Prostate gland (tissue), 2 donors: ENCODE measurements at regions of chr4 and their contacts with region 1.

Region 1: GRCh38 chr4:157992038-157992705 is 180.7 kb downstream of the GASK1B start:
- DNase-seq: peak; percentile 79
- H3K4me3 ChIP-seq: no peak overlapping the region
- H3K27ac ChIP-seq: peak overlapping the region; percentile 35 to 46
- H3K4me1 ChIP-seq: peaks cover 10% of the 10 kb centered on the region
- H3K27me3 ChIP-seq: no peaks in the 10 kb centered on the region
- CTCF ChIP-seq: peak; percentile 63 to 87 (median 82)
- POLR2A ChIP-seq: no peak

Region 2: GRCh38 chr4:157700898-157701694 is 291.1 kb before region 1 on chr4:
- intact Hi-C with region 1: no loop called
- DNase-seq: no peak
- H3K4me3 ChIP-seq: no peak overlapping the region
- H3K27ac ChIP-seq: no peak overlapping the region
- H3K4me1 ChIP-seq: no peaks in the 10 kb centered on the region
- H3K27me3 ChIP-seq: no peaks in the 10 kb centered on the region
- CTCF ChIP-seq: no peak
- POLR2A ChIP-seq: no peak

Region 3: DNA sequence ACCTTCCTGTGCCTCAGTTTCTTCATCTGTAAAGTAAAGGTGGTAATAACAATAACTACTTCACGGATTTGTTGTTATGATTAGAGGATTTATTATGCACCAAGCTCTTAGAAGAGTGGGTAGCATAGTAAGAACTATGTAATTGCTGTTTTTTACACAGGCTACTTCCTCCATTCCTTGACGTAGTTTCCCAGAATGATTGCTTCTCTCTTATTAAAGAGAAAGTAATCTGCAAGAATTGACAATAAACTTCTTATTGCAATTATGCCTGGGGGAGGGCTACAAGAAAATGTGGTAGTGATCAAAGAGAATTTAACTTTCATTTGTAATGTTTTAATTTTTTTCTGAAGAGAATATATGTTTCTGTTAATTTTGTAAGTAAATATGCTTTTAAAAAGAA is 58.0 kb before region 1 on chr4:
- intact Hi-C with region 1: no loop called
- DNase-seq: no peak
- H3K4me3 ChIP-seq: no peak overlapping the region
- H3K27ac ChIP-seq: no peak overlapping the region
- H3K4me1 ChIP-seq: no peaks in the 10 kb centered on the region
- H3K27me3 ChIP-seq: no peaks in the 10 kb centered on the region
- CTCF ChIP-seq: no peak
- POLR2A ChIP-seq: no peak

Region 4: GRCh38 chr4:158172261-158173258 is 180.4 kb after region 1 on chr4 and contains the start of gene GASK1B:
- intact Hi-C with region 1: loop called (anchors 2 kb)
- DNase-seq: peak; percentile 20
- H3K4me3 ChIP-seq: peak within 1 kb of the TSS; percentile 30 to 39
- H3K27ac ChIP-seq: peak within 1 kb of the TSS; percentile 66 to 71
- H3K4me1 ChIP-seq: peaks cover 7% of the 10 kb centered on the region
- H3K27me3 ChIP-seq: no peaks in the 10 kb centered on the region
- CTCF ChIP-seq: peak in 3 of 4 experiments; percentile 47 to 63 (median 58)
- POLR2A ChIP-seq: no peak
- total RNA-seq, gene GASK1B: 20.2 to 27.3 TPM

Region 5: DNA sequence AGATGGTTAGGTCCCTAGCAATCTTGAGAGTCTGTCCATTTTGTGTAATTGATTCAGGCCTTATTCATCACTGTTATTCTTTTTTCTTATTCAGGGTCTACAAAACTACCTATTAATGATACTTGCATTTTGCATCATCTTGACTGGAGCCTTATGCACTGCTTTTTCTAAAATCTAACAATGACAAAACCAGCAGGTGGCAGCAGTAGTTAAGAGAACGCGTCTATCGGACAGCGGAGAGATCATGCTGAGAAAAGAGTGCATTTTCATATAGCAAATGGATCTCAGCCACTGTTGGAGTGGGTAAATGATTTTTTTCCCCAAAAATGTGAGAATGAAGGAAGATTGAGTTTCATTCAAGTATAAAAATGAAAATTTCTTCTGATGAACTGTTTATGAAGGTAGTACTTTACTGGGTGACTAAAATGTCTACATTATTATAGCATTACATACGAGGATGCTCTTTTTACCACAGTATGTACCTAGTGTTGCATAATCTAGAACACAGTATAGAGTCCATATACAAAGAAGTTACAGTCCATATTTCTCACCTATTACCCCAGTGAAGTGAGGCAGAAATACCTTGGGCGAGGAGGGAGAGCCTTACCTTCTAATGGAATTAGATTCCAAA is 261.3 kb after region 1 on chr4:
- intact Hi-C with region 1: loop called (anchors 5 kb)
- DNase-seq: peak; percentile 55
- H3K4me3 ChIP-seq: no peak overlapping the region
- H3K27ac ChIP-seq: no peak overlapping the region
- H3K4me1 ChIP-seq: no peaks in the 10 kb centered on the region
- H3K27me3 ChIP-seq: no peaks in the 10 kb centered on the region
- CTCF ChIP-seq: peak in 3 of 4 experiments; percentile 51 to 60 (median 55)
- POLR2A ChIP-seq: no peak

Region 6: GRCh38 chr4:158624889-158625478 is 632.8 kb after region 1 on chr4:
- intact Hi-C with region 1: loop called (anchors 10 kb)
- DNase-seq: no peak
- H3K4me3 ChIP-seq: no peak overlapping the region
- H3K27ac ChIP-seq: no peak overlapping the region
- H3K4me1 ChIP-seq: no peaks in the 10 kb centered on the region
- H3K27me3 ChIP-seq: no peaks in the 10 kb centered on the region
- CTCF ChIP-seq: peak; percentile 39 to 68 (median 60)
- POLR2A ChIP-seq: no peak